Naive thymus-derived CD4-positive, alpha-beta T cell (primary cell): ENCODE measurements at regions of chr1 and their contacts with region 1.

Region 1: DNA sequence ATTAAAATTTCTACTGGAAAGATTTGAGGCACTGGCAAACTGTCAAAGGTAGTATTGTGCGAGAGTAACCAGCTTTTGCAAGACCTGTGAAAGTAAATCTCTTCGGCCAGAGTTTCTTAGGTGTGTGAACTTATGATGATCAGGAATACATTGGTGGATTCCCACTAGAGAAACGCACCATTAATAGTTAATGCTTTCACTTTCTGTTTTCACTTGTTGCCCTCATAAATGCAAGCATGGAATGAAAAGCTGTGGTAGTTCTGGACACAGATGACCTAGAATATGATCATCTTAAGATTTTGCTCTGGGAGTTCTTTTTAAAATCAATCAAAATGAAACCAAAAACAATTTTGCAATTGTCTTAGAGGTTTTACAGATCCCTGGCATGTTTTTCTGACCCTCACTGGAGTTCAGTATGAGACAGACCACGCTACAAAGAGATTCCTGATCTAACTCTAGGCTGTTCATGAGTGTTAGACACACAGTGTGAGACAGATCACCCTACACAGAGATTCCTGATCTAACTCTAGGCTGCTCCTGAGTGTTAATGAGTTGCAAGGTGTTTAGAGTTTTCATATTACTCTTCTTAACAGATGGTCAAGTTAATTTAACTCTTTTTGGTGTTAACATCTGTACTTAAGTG is 98.8 kb downstream of the SDCCAG8 start:
- DNase-seq: peak in 2 of 9 donors; percentile 4 to 13
- ATAC-seq: peak; percentile 29
- H3K4me3 ChIP-seq: peak overlapping the region; percentile 39
- H3K4me3 Mint-ChIP-seq: peak overlapping the region; percentile 43 to 82 (median 78)
- H3K27ac ChIP-seq: no peak overlapping the region
- H3K27ac Mint-ChIP-seq: peak overlapping the region; percentile 14 to 78 (median 59)
- H3K4me1 ChIP-seq: no peaks in the 10 kb centered on the region
- H3K4me1 Mint-ChIP-seq: peaks cover 9 to 22% (median 20%) of the 10 kb centered on the region in 7 donors
- H3K27me3 ChIP-seq: no peaks in the 10 kb centered on the region
- H3K27me3 Mint-ChIP-seq: no peaks in the 10 kb centered on the region

Region 2: GRCh38 chr1:243335292-243335691 is 19.3 kb before region 1 on chr1:
- CTCF ChIA-PET with region 1: no interaction called
- POLR2A ChIA-PET with region 1: no interaction called
- intact Hi-C with region 1: no loop called
- DNase-seq: no peak
- ATAC-seq: no peak
- H3K4me3 ChIP-seq: no peak overlapping the region
- H3K4me3 Mint-ChIP-seq: no peak overlapping the region
- H3K27ac ChIP-seq: no peak overlapping the region
- H3K27ac Mint-ChIP-seq: no peak overlapping the region
- H3K4me1 ChIP-seq: no peaks in the 10 kb centered on the region
- H3K4me1 Mint-ChIP-seq: peaks cover 0 to 10% (median 0%) of the 10 kb centered on the region in 7 donors
- H3K27me3 ChIP-seq: no peaks in the 10 kb centered on the region
- H3K27me3 Mint-ChIP-seq: no peaks in the 10 kb centered on the region

Region 3: DNA sequence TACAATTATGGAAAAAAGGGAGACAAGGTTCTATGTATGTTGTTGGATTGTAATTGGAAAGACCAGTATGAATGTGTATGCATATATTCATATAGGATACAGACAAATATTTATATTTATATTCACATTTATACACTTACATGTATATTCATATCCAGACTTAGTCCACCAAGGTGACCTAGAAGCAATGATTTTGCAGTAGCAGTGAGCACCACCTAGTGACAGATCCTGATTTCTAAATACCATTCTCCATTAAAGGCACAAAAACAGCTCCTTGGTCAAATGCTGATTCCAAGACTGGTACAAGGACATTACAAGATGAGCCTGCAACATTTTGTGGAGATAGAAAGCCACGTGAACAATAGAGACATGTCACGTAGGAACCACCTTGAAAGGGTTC is 54.7 kb after region 1 on chr1:
- CTCF ChIA-PET with region 1: no interaction called
- POLR2A ChIA-PET with region 1: no interaction called
- intact Hi-C with region 1: loop called in 1 of 2 experiments (anchors 2 kb)
- DNase-seq: no peak
- ATAC-seq: no peak
- H3K4me3 ChIP-seq: no peak overlapping the region
- H3K4me3 Mint-ChIP-seq: no peak overlapping the region
- H3K27ac ChIP-seq: no peak overlapping the region
- H3K27ac Mint-ChIP-seq: no peak overlapping the region
- H3K4me1 ChIP-seq: no peaks in the 10 kb centered on the region
- H3K4me1 Mint-ChIP-seq: peaks cover 0 to 18% (median 10%) of the 10 kb centered on the region in 7 donors
- H3K27me3 ChIP-seq: no peaks in the 10 kb centered on the region
- H3K27me3 Mint-ChIP-seq: no peaks in the 10 kb centered on the region